ENCODE measurements at regions of chr20 and their contacts with region 1.

Region 1: DNA sequence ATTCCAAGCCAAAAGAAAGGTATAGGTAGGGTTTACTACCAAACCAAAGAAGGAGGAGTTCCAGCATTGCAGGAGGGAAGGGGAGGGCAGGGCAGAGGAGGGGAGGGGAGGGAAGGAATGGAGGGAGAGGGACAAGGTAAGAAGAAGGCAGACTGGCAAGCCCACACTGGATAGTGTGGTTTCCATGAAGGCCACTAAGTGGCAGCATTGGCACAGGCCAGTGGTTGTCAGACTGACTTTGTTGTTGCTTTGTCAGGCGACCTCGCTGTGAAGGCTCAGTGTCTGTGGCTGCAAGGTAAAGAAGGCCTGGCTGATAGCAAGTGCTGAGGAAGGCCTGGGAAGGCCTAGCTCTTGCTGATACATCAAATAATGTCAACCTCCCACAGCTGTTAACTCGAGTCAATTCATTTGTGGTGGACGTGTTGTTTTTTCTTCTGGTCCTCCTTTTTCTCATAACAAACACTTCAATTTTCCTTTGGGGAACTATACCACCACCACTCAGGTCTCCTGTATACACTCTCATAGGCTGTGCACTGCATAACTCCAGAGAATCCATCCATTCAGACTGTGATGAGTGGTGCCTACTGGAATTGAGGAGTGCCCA is 7.7 kb upstream of the ZNF334 start:
- DNase-seq: no peak
- ATAC-seq: peak; percentile 79
- H3K4me3 Mint-ChIP-seq: no peak overlapping the region
- H3K27ac Mint-ChIP-seq: no peak overlapping the region
- H3K4me1 Mint-ChIP-seq: no peaks in the 10 kb centered on the region
- H3K27me3 Mint-ChIP-seq: peaks cover 17% of the 10 kb centered on the region
- CTCF ChIP-seq: no peak

Region 2: DNA sequence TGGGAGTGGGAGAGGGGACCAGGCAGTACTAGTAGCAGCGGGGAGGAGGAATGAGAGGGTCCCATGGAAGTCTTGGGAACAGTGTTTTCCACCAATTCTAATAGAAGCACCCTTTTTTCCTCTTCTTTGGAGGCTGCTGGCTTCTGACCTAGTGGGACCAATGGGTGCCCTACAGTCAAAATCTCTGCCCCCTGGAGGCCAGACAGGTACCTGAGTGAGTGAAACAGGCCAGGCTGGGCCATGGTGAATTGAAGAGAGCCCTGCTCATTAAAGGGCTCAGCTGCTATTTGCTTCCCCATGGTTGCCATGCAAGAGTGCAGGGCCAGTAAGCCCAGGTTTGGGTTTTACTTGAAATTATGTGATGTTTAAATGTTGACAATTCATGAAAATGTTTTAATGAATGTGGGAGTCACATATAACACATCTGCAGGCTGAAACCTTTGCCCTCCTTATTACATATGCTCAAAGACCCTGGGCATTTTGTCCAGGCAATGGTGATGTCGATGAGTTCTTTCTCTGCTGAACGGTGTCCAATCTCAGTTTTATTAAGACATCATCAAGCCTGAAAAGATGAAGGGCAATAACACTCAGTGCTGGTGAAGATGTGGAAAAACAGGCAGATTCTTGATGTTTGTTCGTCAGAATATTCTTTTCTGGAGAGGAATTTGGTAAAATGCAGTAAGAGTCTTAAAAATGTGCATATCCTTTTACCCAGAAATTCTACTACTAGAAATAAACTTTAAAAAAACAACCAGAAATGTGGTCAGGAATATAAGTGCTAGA is 71.7 kb after region 1 on chr20:
- CTCF ChIA-PET with region 1: interaction called, 3 read pairs
- POLR2A ChIA-PET with region 1: no interaction called
- intact Hi-C with region 1: loop called (anchors 2 kb)
- DNase-seq: no peak
- ATAC-seq: no peak
- H3K4me3 Mint-ChIP-seq: no peak overlapping the region
- H3K27ac Mint-ChIP-seq: no peak overlapping the region
- H3K4me1 Mint-ChIP-seq: no peaks in the 10 kb centered on the region
- H3K27me3 Mint-ChIP-seq: peaks cover 17% of the 10 kb centered on the region
- CTCF ChIP-seq: no peak

Region 3: GRCh38 chr20:46681032-46681854 is 160.2 kb after region 1 on chr20:
- CTCF ChIA-PET with region 1: interaction called, 50 read pairs
- POLR2A ChIA-PET with region 1: no interaction called
- intact Hi-C with region 1: no loop called
- DNase-seq: no peak
- ATAC-seq: peak; percentile 71
- H3K4me3 Mint-ChIP-seq: no peak overlapping the region
- H3K27ac Mint-ChIP-seq: peak overlapping the region; percentile 21
- H3K4me1 Mint-ChIP-seq: peaks cover 42% of the 10 kb centered on the region
- H3K27me3 Mint-ChIP-seq: no peaks in the 10 kb centered on the region
- CTCF ChIP-seq: no peak

Measured in activated B cell treated with CpG ODN at 0.5 μM for 24 hours (primary cell).